Activated T-helper 2 cell treated with anti-CD3 and anti-CD28 coated beads, Interferon-gamma antibody, Interleukin-2, Interleukin-4, amounts not matched to agents 10 μg/mL and 5 μg/mL and 100 μg/mL, durations not matched to agents 14 hours and 24 hours and 36 hours (primary cell): ENCODE measurements at regions of chr2 and their contacts with region 1.

Region 1: GRCh38 chr2:70948337-70949003 is 12.8 kb downstream of the ATP6V1B1 start:
- DNase-seq: peak; percentile 62
- H3K4me3 Mint-ChIP-seq: peak overlapping the region; percentile 56
- H3K27ac Mint-ChIP-seq: no peak overlapping the region
- H3K4me1 Mint-ChIP-seq: peaks cover 15% of the 10 kb centered on the region
- H3K27me3 Mint-ChIP-seq: peaks cover 27% of the 10 kb centered on the region

Region 2: DNA sequence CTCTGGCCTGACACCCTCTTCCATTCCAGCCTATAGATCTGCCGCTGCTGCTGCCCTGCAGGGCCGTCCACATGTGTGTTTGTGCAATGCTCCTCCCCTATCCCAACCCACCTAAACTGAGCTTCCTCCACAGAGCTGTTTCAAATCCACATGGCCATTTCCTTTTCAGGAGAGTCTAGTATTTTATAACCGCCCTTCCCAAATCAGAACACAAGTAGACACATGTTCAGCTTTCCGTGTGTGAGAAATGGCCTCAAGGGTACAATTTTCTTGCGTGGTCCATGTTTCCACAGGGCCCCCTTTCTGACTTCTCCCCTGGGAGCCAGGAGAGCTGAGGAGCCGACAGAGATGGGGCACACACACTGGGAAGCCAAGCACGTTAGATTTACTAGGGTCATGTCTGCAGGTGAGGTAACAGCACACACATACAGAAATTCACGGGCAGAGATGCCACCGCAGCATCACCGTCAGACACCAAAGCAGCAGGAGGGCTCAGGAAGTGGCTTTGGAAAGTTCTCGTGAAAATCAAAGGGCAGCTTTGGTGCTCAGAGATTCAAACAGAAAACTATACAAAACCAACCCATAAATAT is 292.0 kb before region 1 on chr2:
- intact Hi-C with region 1: loop called (anchors 10 kb)
- DNase-seq: no peak
- H3K4me3 Mint-ChIP-seq: no peak overlapping the region
- H3K27ac Mint-ChIP-seq: no peak overlapping the region
- H3K4me1 Mint-ChIP-seq: peaks cover 15% of the 10 kb centered on the region
- H3K27me3 Mint-ChIP-seq: peaks cover 27% of the 10 kb centered on the region

Region 3: GRCh38 chr2:70861777-70862625 is 86.5 kb before region 1 on chr2:
- intact Hi-C with region 1: loop called (anchors 2 kb)
- DNase-seq: peak; percentile 52
- H3K4me3 Mint-ChIP-seq: no peak overlapping the region
- H3K27ac Mint-ChIP-seq: no peak overlapping the region
- H3K4me1 Mint-ChIP-seq: peaks cover 4% of the 10 kb centered on the region
- H3K27me3 Mint-ChIP-seq: peaks cover 53% of the 10 kb centered on the region

Region 4: GRCh38 chr2:70871398-70872211 is 76.9 kb before region 1 on chr2:
- intact Hi-C with region 1: loop called (anchors 2 kb)
- DNase-seq: peak; percentile 68
- H3K4me3 Mint-ChIP-seq: no peak overlapping the region
- H3K27ac Mint-ChIP-seq: no peak overlapping the region
- H3K4me1 Mint-ChIP-seq: no peaks in the 10 kb centered on the region
- H3K27me3 Mint-ChIP-seq: peaks cover 28% of the 10 kb centered on the region

Region 5: DNA sequence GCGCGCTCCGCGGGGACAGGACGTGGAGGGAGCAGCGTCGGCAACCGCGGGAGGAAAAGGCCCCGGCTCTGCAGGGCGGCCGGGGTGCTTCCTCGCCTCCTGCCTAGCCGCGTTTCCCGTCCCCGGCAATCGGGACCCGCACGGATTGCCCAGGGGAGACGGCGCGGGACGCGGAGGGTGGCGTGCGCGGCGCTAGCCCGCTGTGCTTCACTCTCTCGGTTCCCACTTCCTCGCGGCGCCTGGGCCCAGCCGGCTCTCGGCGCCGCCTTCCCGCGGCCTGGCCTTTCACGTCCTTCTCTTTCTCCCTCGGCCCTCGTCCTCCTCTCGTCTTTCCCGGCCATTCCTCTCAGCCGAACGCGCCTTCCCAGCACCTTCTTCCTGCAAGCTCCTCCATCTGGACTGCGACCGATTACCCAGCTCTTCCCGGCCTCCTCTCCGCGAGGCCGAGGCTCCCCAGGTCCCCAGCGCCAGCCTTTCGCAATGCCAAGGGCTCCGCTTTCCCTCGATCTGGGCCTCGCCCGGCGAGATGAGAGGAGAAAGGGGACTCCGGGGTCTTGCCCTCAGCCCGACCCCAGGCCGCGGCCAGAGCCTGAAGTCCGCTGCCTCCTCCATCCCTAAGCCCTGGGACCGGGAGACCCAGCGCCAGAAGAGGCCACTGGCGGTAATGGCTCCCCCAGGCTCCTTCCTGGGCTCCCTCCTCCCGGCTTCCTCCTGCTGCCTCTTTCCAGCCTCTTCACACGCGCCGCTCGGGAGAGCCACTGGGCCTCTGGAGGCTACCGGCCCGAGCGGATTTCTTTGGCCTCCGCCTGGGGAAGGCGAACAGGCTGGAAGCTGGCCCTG is 47.0 kb before region 1 on chr2:
- intact Hi-C with region 1: no loop called
- DNase-seq: no peak
- H3K4me3 Mint-ChIP-seq: peak overlapping the region; percentile 54
- H3K27ac Mint-ChIP-seq: no peak overlapping the region
- H3K4me1 Mint-ChIP-seq: peaks cover 8% of the 10 kb centered on the region
- H3K27me3 Mint-ChIP-seq: peaks cover 92% of the 10 kb centered on the region